ENCODE measurements at regions of chr4 and their contacts with region 1.

Region 1: GRCh38 chr4:54683616-54684346 is 26.0 kb downstream of the KIT start:
- DNase-seq: peak; percentile 47 to 56 (median 49)
- H3K4me3 ChIP-seq: no peak overlapping the region
- H3K4me3 Mint-ChIP-seq: peak overlapping the region; percentile 51 to 84 (median 68)
- H3K27ac ChIP-seq: no peak overlapping the region
- H3K27ac Mint-ChIP-seq: peak overlapping the region in 6 of 7 donors; percentile 65 to 94 (median 84)
- H3K4me1 ChIP-seq: peaks cover 9% of the 10 kb centered on the region
- H3K4me1 Mint-ChIP-seq: peaks cover 9 to 34% (median 24%) of the 10 kb centered on the region in 4 donors
- H3K27me3 ChIP-seq: no peaks in the 10 kb centered on the region
- H3K27me3 Mint-ChIP-seq: peaks cover 0 to 3% of the 10 kb centered on the region in 2 donors

Region 2: DNA sequence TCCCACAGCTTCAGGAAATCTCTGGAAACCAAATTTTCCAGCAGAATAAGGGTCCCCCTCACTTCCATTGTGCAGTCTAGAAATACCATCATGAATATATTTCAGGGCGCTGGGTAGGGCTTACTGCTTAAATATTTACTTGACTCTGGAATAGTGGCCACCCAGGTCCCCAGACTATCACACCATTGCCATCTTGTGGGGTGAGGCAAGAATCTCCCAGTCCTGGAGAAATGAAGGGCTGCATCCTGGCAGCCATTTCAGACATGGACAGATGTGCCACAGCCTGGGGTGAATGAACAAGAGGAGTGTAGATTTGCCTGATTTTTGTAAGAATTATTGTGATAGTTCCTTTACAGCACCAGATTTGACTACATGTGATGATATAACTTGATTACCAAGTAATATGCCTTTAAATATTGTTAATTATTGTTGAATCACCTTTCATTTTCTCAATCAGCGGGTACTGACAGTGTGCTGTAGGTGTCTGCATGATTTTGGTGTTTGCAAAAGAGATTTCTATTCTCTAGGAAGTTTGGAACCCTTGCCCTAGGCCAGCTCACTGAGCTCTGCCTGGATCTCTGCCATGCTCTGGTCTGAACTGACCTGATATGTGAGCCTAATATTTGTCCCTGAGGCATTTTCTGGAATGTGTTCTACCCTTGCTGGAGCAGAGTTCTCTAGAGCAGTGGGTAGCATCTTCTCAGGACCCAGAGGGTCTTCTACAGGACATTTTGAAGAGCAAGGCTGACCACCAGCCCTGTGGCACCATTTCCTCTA is 157.4 kb after region 1 on chr4:
- CTCF ChIA-PET with region 1: no interaction called
- POLR2A ChIA-PET with region 1: no interaction called
- intact Hi-C with region 1: loop called (anchors 2 kb)
- DNase-seq: no peak
- H3K4me3 ChIP-seq: no peak overlapping the region
- H3K4me3 Mint-ChIP-seq: no peak overlapping the region
- H3K27ac ChIP-seq: no peak overlapping the region
- H3K27ac Mint-ChIP-seq: no peak overlapping the region
- H3K4me1 ChIP-seq: no peaks in the 10 kb centered on the region
- H3K4me1 Mint-ChIP-seq: peaks cover 0 to 8% (median 4%) of the 10 kb centered on the region in 4 donors
- H3K27me3 ChIP-seq: no peaks in the 10 kb centered on the region
- H3K27me3 Mint-ChIP-seq: no peaks in the 10 kb centered on the region

Region 3: DNA sequence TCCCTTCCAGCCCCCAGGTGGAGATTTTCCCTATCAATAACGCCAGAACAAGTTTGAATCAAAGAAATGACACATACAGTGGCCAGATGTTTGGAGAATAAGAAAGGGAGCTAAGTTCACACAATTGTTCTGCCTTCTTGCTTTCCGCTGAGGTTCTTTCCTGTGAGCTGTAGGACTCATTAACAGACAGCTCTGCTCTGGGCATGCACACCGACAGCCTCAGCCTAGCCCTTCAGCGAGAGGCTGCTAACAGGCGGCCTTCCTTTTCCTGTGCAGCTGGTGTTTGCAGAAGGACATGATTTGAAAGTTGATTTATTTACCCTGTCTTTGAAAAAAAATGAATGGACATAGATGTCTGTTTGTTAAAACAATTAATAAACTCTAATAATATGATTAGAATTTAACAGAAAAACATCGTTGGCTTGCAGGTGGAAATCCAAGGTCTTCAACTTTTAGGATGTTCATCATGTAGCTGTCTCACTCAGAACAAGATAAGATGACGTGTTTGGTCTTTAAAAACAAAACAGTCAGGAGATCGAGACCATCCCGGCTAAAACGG is 258.3 kb after region 1 on chr4:
- CTCF ChIA-PET with region 1: no interaction called
- POLR2A ChIA-PET with region 1: no interaction called
- intact Hi-C with region 1: loop called (anchors 1 kb)
- DNase-seq: peak; percentile 62 to 80 (median 68)
- H3K4me3 ChIP-seq: peak overlapping the region in 1 of 2 donors; percentile 6
- H3K4me3 Mint-ChIP-seq: peak overlapping the region; percentile 58 to 83 (median 78)
- H3K27ac ChIP-seq: peak overlapping the region; percentile 49
- H3K27ac Mint-ChIP-seq: peak overlapping the region; percentile 86 to 96 (median 93)
- H3K4me1 ChIP-seq: peaks cover 28% of the 10 kb centered on the region
- H3K4me1 Mint-ChIP-seq: peaks cover 31 to 74% (median 50%) of the 10 kb centered on the region in 4 donors
- H3K27me3 ChIP-seq: no peaks in the 10 kb centered on the region
- H3K27me3 Mint-ChIP-seq: peaks cover 0 to 1% of the 10 kb centered on the region in 2 donors

Region 4: GRCh38 chr4:54961357-54961975 is 277.7 kb after region 1 on chr4:
- CTCF ChIA-PET with region 1: interaction called, 19 read pairs
- POLR2A ChIA-PET with region 1: no interaction called
- intact Hi-C with region 1: no loop called
- DNase-seq: peak in 1 of 5 donors; percentile 26
- H3K4me3 ChIP-seq: no peak overlapping the region
- H3K4me3 Mint-ChIP-seq: no peak overlapping the region
- H3K27ac ChIP-seq: no peak overlapping the region
- H3K27ac Mint-ChIP-seq: peak overlapping the region in 2 of 7 donors; percentile 5 to 52
- H3K4me1 ChIP-seq: peaks cover 11% of the 10 kb centered on the region
- H3K4me1 Mint-ChIP-seq: peaks cover 6 to 24% (median 15%) of the 10 kb centered on the region in 4 donors
- H3K27me3 ChIP-seq: no peaks in the 10 kb centered on the region
- H3K27me3 Mint-ChIP-seq: no peaks in the 10 kb centered on the region

Region 5: DNA sequence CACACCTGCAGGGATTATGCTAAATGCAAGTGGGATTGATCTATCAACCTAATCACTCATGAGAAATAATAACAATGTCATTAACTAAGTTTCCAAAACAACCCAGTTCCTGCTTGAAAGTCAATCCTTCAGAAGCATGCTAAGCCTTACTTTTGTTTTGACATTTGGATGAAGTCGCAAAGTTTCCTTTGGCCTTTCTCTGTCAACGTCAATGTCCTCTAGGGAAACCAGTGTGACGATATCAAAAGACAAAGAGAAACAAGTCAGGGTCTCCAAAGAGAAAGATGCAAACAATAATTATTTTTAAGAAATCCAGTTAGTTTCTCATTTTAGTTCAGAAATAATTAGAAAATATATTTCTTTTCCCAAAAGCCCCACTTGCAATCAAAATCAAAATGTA is 575.5 kb after region 1 on chr4:
- CTCF ChIA-PET with region 1: no interaction called
- POLR2A ChIA-PET with region 1: no interaction called
- intact Hi-C with region 1: no loop called
- DNase-seq: no peak
- H3K4me3 ChIP-seq: no peak overlapping the region
- H3K4me3 Mint-ChIP-seq: no peak overlapping the region
- H3K27ac ChIP-seq: no peak overlapping the region
- H3K27ac Mint-ChIP-seq: no peak overlapping the region
- H3K4me1 ChIP-seq: no peaks in the 10 kb centered on the region
- H3K4me1 Mint-ChIP-seq: no peaks in the 10 kb centered on the region
- H3K27me3 ChIP-seq: no peaks in the 10 kb centered on the region
- H3K27me3 Mint-ChIP-seq: peaks cover 6 to 7% of the 10 kb centered on the region in 2 donors

Region 6: GRCh38 chr4:55736605-55737183 is 1052.9 kb after region 1 on chr4:
- CTCF ChIA-PET with region 1: no interaction called
- POLR2A ChIA-PET with region 1: no interaction called
- intact Hi-C with region 1: loop called (anchors 5 kb)
- DNase-seq: peak in 4 of 5 donors; percentile 2 to 6 (median 4)
- H3K4me3 ChIP-seq: no peak overlapping the region
- H3K4me3 Mint-ChIP-seq: no peak overlapping the region
- H3K27ac ChIP-seq: no peak overlapping the region
- H3K27ac Mint-ChIP-seq: no peak overlapping the region
- H3K4me1 ChIP-seq: no peaks in the 10 kb centered on the region
- H3K4me1 Mint-ChIP-seq: no peaks in the 10 kb centered on the region
- H3K27me3 ChIP-seq: no peaks in the 10 kb centered on the region
- H3K27me3 Mint-ChIP-seq: peaks cover 21 to 22% of the 10 kb centered on the region in 2 donors